HCT116 (cell line): ENCODE measurements at regions of chr11 and their contacts with region 1.

Region 1: GRCh38 chr11:74726547-74727182 is 4.6 kb downstream of the CHRDL2 start:
- DNase-seq: peak; percentile 54
- ATAC-seq: peak; percentile 100
- H3K4me3 ChIP-seq: no peak overlapping the region
- H3K27ac ChIP-seq: no peak overlapping the region
- H3K4me1 ChIP-seq: no peaks in the 10 kb centered on the region; a peak in 1 of 4 replicates
- H3K27me3 ChIP-seq: peaks cover 8% of the 10 kb centered on the region
- CTCF ChIP-seq: peak; percentile 86 to 97 (median 89)
- POLR2A ChIP-seq: no peak
- RAD21 ChIP-seq: peak; percentile 82

Region 2: DNA sequence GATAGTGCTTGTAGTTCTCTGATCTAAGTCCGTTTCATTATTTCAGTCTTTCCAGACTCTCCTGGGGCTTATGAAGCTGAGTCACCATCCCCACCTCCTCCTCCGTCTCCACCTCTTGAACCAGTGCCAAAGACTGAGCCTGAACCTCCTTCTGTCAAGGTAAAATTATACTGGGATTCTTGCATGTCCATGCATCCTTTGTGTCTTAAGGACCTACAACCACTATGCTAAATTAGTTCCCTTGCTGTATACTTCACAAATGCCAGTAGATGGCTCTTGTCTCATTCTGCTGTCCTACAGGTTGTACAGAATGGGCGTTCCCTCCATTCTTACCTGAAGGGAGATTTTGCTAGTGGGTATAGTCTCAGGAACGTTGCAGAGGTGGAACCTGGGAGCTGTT is 92.1 kb before region 1 on chr11:
- CTCF ChIA-PET with region 1: interaction called, 10 read pairs
- POLR2A ChIA-PET with region 1: no interaction called
- RAD21 ChIA-PET with region 1: no interaction called
- intact Hi-C with region 1: no loop called
- DNase-seq: peak; percentile 71
- ATAC-seq: peak; percentile 85
- H3K4me3 ChIP-seq: no peak overlapping the region
- H3K27ac ChIP-seq: peak overlapping the region; percentile 33; the same call in 1 of the 2 replicates
- H3K4me1 ChIP-seq: peaks cover 47 to 64% of the 10 kb centered on the region in 2 experiments
- H3K27me3 ChIP-seq: no peaks in the 10 kb centered on the region
- CTCF ChIP-seq: peak; percentile 37 to 55 (median 55); a peak in 5 of 6 replicates
- POLR2A ChIP-seq: no peak
- RAD21 ChIP-seq: peak; percentile 63

Region 3: GRCh38 chr11:74702383-74703007 is 24.2 kb before region 1 on chr11:
- CTCF ChIA-PET with region 1: interaction called, 41 read pairs
- POLR2A ChIA-PET with region 1: no interaction called
- RAD21 ChIA-PET with region 1: interaction called, 4 to 14 read pairs
- intact Hi-C with region 1: no loop called
- DNase-seq: peak; percentile 38
- ATAC-seq: peak; percentile 91
- H3K4me3 ChIP-seq: no peak overlapping the region
- H3K27ac ChIP-seq: no peak overlapping the region
- H3K4me1 ChIP-seq: peaks cover 0 to 6% of the 10 kb centered on the region in 2 experiments; a peak in 1 of 4 replicates
- H3K27me3 ChIP-seq: no peaks in the 10 kb centered on the region
- CTCF ChIP-seq: peak; percentile 78 to 98 (median 92)
- POLR2A ChIP-seq: no peak
- RAD21 ChIP-seq: peak; percentile 64